ENCODE measurements at regions of chr17 and their contacts with region 1.

Region 1: DNA sequence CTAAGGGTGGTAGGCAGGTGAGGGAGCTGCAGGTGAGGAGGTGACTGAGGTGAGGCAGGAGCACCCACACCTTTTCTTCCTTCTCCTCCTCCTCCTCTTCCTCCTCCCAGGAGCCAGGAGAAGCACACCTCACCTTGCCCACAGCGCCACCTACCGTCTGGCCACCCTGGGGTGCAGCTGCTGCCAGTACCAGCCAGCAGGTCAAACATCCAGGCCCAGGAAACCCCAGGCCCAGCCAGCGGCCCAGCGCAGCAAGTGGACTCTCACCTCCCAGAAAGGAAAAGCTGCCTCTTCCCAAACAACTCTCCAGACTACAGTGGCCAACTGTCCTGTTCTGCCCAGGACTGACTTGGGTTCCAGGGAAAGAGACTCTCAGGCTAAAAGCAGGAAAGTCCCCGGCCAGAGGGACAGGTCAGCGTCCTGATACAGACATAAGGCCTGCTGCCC is 22.7 kb downstream of the PEMT start:
- DNase-seq: peak; percentile 52
- H3K4me3 ChIP-seq: no peak overlapping the region
- H3K27ac ChIP-seq: no peak overlapping the region
- H3K4me1 ChIP-seq: no peaks in the 10 kb centered on the region
- CTCF ChIP-seq: peak; percentile 85

Region 2: DNA sequence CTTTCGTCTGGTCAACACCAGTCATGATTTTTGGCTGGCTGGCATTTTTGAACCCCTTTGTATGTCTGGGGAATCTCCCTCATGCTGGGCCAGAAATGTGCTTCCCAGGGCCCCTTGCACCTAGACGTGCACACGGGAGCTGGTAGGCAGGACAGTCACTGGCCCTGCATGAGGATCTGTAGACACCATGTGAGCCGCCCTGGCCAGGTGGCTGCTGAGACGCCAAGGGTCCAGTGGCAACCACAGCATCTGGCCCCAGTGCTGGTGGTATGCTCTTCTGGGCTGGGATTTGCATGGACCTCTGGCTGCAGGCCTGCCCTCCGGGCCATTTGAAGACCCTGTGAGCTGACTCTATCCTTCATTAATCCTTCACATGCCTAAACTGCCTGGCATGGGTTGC is 198.1 kb before region 1 on chr17:
- CTCF ChIA-PET with region 1: interaction called, 11 read pairs
- POLR2A ChIA-PET with region 1: no interaction called
- intact Hi-C with region 1: no loop called
- DNase-seq: no peak
- H3K4me3 ChIP-seq: no peak overlapping the region
- H3K27ac ChIP-seq: no peak overlapping the region
- H3K4me1 ChIP-seq: no peaks in the 10 kb centered on the region
- CTCF ChIP-seq: no peak

Region 3: GRCh38 chr17:17496189-17497064 is 72.3 kb before region 1 on chr17 and contains the start of gene RASD1:
- CTCF ChIA-PET with region 1: interaction called, 3 read pairs
- POLR2A ChIA-PET with region 1: no interaction called
- intact Hi-C with region 1: loop called (anchors 1 kb)
- DNase-seq: peak; percentile 75
- H3K4me3 ChIP-seq: peak within 1 kb of the TSS; percentile 41
- H3K27ac ChIP-seq: no peak within 1 kb of the TSS
- H3K4me1 ChIP-seq: peaks cover 10% of the 10 kb centered on the region
- CTCF ChIP-seq: peak; percentile 83
- total RNA-seq, gene RASD1: 0.08 and 0.19 TPM in 2 replicates

Region 4: GRCh38 chr17:17506811-17507464 is 61.8 kb before region 1 on chr17:
- CTCF ChIA-PET with region 1: no interaction called
- POLR2A ChIA-PET with region 1: no interaction called
- intact Hi-C with region 1: no loop called
- DNase-seq: no peak
- H3K4me3 ChIP-seq: no peak overlapping the region
- H3K27ac ChIP-seq: no peak overlapping the region
- H3K4me1 ChIP-seq: no peaks in the 10 kb centered on the region
- CTCF ChIP-seq: no peak

Region 5: GRCh38 chr17:17591355-17592298 is 22.9 kb after region 1 on chr17 and contains the start of gene PEMT:
- CTCF ChIA-PET with region 1: interaction called, 10 read pairs
- POLR2A ChIA-PET with region 1: no interaction called
- intact Hi-C with region 1: no loop called
- DNase-seq: peak; percentile 98
- H3K4me3 ChIP-seq: peak within 1 kb of the TSS; percentile 87
- H3K27ac ChIP-seq: peak within 1 kb of the TSS; percentile 56
- H3K4me1 ChIP-seq: peaks cover 14% of the 10 kb centered on the region
- CTCF ChIP-seq: no peak
- total RNA-seq, gene PEMT: 40.2 and 53.5 TPM in 2 replicates

Measured in OCI-LY7 (cell line).